ENCODE measurements at regions of chr6 and their contacts with region 1.

Region 1: DNA sequence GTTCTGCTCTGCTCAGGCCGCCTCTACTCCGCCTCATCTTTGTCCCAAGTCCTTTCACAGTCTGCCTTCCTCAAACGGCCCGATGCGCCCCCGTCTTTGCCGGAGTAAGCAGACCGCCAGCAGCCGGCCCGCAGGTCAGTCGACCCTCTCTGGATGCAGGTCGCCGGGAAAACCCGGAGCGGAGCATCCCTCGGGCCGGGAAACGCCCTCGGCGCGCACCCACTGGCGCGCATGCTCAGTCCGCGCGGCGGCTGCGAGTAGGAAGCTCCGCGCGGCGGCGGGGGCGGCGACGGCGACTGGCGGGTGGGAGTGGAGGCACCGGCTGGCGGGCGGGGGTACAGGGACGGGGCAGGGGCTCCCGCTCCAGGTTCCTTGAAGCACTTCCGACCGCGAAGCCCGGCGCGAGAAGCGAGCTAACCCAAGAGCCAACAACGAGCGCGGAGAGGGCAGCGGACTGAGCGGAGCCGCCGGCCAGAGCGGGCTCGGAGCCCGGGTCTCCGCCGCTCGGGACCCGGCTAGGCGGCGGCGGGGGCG is at the start of gene LRRC1:
- DNase-seq: peak; percentile 94 to 98
- ATAC-seq: peak; percentile 96
- H3K4me3 ChIP-seq: peak within 1 kb of the TSS; percentile 77 to 80
- H3K27ac ChIP-seq: peak within 1 kb of the TSS; percentile 54 to 70
- H3K4me1 ChIP-seq: no peaks in the 10 kb centered on the region
- H3K27me3 ChIP-seq: no peaks in the 10 kb centered on the region
- total RNA-seq, gene LRRC1: 25.3 to 25.4 TPM

Region 2: DNA sequence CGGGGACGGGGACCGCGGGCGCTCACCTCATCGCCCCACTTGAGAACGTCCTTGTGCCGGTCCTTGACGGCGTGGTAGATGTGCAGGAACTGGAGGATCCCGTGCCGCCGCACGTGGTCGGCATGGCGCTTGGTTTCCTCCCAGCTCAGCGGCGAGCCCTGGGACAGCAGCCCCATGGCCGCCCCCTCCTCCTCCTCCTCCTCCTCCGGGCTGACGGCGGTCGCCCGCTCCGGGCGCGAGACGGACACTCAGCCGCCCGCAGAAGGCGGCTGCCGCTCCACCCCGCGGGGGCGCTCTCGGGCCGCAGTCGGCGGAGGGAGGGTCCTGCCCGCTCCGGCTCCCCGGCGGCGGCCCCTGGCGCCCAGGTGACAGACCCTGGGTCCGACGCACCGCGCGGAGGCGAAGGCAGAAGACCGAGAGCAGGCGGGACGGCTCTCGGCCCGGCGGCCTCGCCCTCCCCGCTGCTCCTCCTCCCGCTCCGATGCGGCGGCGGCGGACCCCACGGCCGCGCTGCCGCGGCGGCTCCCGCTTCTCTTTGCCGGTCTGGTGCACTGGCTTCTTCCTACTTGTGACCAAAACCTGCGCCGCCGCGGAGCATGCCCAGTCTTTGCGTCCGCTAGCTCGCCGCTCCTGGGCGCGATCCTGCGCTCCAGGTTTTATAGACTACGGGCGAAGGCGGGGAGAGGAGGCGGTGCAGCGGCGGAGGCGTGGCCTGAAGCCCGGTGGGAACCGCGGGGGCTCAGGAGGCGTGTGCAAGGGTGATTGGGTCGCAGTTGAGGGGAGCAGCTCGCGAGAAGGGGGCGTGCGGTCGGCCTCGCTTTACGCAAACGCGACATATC is 250.1 kb before region 1 on chr6 and contains the start of gene GCLC:
- intact Hi-C with region 1: loop called in 1 of 2 experiments (anchors 10 kb)
- DNase-seq: peak; percentile 97 to 98
- ATAC-seq: peak; percentile 93
- H3K4me3 ChIP-seq: peak within 1 kb of the TSS; percentile 67 to 86
- H3K27ac ChIP-seq: peak within 1 kb of the TSS in 1 of 2 donors; percentile 69
- H3K4me1 ChIP-seq: no peaks in the 10 kb centered on the region
- H3K27me3 ChIP-seq: no peaks in the 10 kb centered on the region
- total RNA-seq, gene GCLC: 19.0 to 22.0 TPM

Region 3: GRCh38 chr6:53837865-53838769 is 43.3 kb after region 1 on chr6:
- intact Hi-C with region 1: loop called in 1 of 2 experiments (anchors 5 kb)
- DNase-seq: no peak
- ATAC-seq: no peak
- H3K4me3 ChIP-seq: no peak overlapping the region
- H3K27ac ChIP-seq: no peak overlapping the region
- H3K4me1 ChIP-seq: peaks cover 2 to 4% of the 10 kb centered on the region in 2 donors
- H3K27me3 ChIP-seq: no peaks in the 10 kb centered on the region

Region 4: GRCh38 chr6:53894091-53894490 is 99.3 kb after region 1 on chr6:
- intact Hi-C with region 1: loop called in 1 of 2 experiments (anchors 10 kb)
- DNase-seq: no peak
- ATAC-seq: no peak
- H3K4me3 ChIP-seq: no peak overlapping the region
- H3K27ac ChIP-seq: no peak overlapping the region
- H3K4me1 ChIP-seq: peaks cover 2 to 7% of the 10 kb centered on the region in 2 donors
- H3K27me3 ChIP-seq: no peaks in the 10 kb centered on the region

Region 5: GRCh38 chr6:53956068-53956711 is 161.4 kb after region 1 on chr6:
- intact Hi-C with region 1: loop called (anchors 1 kb)
- DNase-seq: peak; percentile 72 to 88
- ATAC-seq: peak; percentile 86
- H3K4me3 ChIP-seq: no peak overlapping the region
- H3K27ac ChIP-seq: no peak overlapping the region
- H3K4me1 ChIP-seq: no peaks in the 10 kb centered on the region
- H3K27me3 ChIP-seq: no peaks in the 10 kb centered on the region